Cardiac septum (tissue), 1 donor: ENCODE measurements at regions of chr6 and their contacts with region 1.

Region 1: DNA sequence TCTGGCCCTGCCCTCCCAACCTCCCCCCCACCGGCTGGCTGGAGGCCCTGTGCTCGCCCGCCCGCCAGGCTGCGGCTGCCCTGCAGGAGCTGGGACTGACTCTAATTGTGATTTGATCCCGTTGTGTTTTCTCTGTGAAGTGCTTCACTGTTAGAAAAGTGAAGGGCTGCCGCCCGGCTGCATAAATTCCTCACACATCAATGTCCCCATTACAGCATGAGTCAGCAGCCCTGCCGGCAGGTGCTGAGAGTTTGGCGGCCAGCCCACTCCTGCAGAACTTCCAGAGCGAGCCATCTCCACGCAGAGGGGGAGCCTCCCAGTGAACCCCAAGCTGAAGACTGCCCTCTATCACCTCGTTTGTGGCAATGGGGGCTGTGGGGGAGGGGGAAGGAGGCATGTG is 137.9 kb downstream of the DLL1 start:
- DNase-seq: no peak

Region 2: DNA sequence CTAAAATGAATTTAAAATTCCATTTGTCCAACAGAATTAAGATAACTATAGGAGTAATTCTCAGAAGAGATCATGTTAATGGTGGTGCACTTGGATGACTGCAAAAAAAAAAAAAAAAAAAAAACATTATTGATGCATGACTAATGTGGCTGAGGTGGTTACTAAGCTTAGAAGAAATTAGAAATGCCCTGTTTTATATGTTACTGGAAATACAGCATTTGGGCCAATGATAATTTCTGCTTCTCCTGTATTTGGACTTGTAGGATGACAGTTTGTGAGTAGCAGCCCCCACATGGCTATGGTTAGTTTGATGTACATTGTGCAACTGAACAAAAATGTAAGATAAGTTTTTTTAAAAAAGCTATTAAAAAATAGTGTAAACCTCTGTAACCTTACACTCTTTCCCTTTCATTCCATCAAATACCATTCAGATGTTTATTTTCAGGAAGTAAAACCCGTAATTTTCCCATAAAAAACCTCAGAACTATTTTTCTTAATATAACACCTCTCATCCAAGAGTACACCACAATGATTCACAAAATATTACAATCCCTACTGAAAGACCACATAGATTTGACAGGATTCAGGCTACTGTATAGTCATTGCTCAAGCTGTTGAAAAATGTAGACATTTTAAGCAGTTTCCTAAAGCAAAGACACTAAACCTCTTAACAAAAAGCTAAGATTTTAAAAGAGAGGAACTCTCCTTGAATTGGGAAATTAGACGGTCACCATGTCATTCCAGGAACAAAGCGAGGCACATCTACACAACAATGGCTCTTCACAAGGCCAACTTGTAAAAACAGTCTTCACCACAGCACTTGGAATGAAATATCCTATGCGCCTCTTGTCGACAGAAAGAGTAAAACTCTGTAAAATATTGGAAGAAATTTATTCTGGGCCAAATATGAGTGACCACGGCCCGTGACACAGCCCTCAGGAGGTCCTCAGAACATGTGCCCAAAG is 534.2 kb before region 1 on chr6:
- intact Hi-C with region 1: no loop called
- DNase-seq: no peak

Region 3: DNA sequence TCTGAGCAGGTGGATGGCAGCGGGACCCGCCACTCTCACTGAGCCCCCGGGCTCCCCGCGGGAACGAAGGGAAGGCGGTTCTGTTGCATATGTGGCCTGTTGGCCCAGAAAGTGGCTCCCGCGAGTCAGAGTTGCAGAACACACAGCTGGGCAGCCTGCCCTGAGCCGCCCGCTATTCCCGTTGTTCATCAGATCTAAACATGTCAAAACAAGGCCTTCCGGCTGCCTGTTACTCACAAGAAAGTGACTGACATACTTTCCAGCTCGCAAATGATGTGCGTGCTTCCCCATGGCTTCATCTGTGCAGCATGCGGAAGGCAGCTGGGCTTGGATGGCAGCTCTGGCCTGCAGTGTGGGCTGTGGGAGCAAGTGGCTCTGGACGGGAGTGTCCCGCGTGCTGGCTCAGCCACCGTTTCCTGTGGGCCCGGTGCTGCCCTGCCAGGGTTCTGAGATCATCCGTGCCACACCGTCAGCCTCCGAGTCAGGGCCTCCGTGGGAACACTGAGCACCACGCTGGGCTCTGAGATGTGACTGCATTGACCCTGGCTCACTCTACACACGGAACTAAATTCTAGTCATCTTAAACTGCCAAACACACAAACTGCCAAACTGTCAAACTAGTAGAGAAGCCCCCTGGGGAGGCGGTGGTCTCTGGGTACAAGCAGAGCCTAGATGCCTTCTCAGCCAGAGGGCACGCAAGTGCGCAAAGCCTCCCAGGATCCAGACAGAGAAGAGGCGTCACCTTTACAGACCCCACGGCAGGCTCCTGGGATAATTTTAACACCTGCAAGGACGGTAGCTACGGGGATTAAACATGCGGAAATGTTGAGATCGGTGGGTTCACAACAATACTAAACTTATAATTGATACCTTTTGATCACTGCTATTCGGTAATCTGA is 174.1 kb before region 1 on chr6:
- intact Hi-C with region 1: no loop called
- DNase-seq: peak; percentile 58

Region 4: DNA sequence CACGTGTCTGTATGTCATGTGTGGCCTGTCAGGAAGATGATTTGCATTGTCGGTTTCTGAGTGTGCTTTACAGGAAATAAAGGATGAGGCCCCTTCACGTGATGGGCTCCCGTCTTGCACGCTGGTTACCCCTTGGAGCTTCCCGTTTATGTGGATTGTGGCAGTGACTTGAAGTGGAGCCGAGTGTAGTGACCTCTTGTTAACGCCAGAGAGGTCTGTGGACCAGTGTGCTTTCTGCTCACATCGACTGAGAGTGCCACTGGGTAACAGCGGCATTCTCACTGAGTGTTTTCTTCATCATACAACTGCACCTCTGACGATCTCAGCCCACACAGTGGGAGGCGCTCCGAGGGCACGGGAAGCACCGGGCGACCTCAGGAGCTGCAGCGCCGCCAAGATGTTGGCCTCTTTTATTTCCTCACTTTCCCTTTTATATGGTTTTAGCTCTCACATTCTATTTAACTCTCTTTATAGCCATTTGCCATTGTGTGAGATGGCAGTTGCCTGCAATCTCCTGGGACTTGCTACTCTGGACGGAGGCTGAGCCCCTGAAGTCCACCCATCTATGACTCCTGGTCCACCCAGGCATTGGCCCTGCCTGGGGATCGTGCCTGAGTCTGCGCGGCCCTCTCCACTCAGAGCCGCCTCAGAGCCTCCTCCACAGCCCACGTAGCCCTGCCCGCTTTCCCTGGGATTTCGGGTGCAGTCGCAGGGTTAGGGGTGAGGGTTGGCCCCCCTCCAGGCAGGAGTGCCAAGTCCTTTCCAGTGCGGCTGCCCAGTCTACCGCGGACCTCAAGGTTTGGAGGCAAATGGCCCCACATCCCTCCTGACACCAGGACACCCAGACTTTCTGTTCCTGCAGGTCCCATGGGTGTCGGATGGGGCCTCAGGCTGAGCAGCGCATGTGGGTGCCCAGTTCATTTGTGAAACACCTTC is 162.6 kb before region 1 on chr6:
- intact Hi-C with region 1: no loop called
- DNase-seq: peak; percentile 72

Region 5: GRCh38 chr6:170279977-170280688 is 127.1 kb after region 1 on chr6:
- intact Hi-C with region 1: loop called (anchors 5 kb)
- DNase-seq: peak; percentile 80